ENCODE measurements at regions of chr3 and their contacts with region 1.

Region 1: GRCh38 chr3:4271834-4272233 is 31.3 kb upstream of the SETMAR start:
- DNase-seq: no peak
- ATAC-seq: no peak
- H3K4me3 Mint-ChIP-seq: no peak overlapping the region
- H3K27ac Mint-ChIP-seq: no peak overlapping the region
- H3K4me1 Mint-ChIP-seq: peaks cover 10% of the 10 kb centered on the region
- H3K27me3 Mint-ChIP-seq: peaks cover 7% of the 10 kb centered on the region

Region 2: DNA sequence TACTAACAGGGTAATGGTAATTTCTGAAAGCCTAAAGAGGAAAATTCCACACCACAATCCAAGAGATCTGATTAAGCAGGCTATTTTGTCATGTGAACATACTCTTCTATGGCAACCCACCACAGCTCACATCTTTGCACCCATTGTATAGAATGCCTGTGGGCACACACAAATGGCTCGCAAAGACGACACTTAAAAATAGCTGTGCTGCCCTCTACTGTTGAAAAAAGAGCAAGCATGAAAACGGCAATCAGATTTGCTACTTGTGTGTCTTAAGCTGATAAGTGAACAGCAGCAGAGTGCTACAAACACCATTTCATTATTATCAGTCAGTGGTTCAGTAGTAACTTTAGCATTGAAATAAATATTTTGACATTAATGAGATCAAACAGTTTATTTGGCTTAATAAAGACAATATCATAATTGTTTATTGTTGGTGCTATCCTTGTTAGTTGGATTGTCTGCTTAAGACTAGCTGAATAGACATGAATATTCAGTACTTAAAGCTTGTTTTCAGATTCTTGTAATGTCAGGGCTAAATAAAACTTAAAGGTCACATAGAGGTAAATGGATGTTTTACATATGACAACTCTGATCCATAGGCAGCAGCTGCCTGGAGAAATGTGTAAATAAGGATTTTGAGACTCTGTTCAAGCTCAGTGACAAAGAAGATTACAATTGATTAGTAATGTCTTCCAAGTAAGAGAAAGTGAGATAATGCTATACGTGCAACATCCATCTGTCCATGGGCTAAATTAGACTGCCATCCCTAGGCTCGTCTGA is 273.5 kb before region 1 on chr3:
- CTCF ChIA-PET with region 1: interaction called, 10 read pairs
- POLR2A ChIA-PET with region 1: no interaction called
- DNase-seq: peak; percentile 47
- ATAC-seq: no peak
- H3K4me3 Mint-ChIP-seq: no peak overlapping the region
- H3K27ac Mint-ChIP-seq: no peak overlapping the region
- H3K4me1 Mint-ChIP-seq: no peaks in the 10 kb centered on the region
- H3K27me3 Mint-ChIP-seq: no peaks in the 10 kb centered on the region